ENCODE measurements at regions of chr18 and their contacts with region 1.

Region 1: DNA sequence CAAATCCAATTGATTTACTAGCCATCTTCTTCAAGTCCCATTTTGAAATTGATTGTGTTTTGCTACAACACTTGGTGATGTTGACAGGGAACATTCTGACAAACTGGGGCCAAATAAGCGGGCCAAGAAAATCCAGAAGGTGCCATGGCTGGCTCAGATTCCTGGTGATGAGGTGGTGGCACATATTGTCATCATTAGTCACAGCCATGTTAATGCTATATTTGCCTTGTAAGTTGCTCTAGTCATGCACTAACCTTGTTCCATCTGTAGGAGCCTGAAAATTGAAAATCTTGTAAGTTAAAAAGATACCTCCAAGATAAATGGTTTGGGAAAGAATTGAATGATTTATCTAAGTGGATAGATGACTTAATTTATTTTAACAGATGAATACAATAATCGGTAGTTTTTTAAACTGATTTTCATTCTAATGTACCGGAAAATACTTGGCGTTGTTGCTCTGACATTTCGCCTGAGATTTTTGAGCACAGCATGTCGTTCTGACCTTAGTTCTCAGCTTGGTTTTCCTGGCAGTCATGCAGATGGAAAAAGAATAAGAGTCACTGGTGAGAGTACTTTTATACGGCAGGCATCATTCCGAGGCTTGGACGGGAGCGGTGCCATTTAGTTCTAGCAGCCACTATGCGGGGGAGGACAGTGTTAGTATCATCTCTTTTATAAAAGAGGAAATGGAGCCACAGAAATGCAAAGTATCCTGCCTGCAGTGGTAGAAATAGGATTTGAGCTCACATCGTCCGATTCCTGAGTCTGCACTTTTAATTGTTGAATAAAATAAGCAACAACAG is 133.9 kb downstream of the ZNF532 start:
- DNase-seq: peak; percentile 79
- ATAC-seq: peak; percentile 79 to 83

Region 2: GRCh38 chr18:58864146-58865032 is 134.2 kb before region 1 on chr18 and contains the start of gene ZNF532:
- intact Hi-C with region 1: loop called (anchors 5 to 10 kb)
- DNase-seq: peak; percentile 36
- ATAC-seq: peak; percentile 39 to 53
- total RNA-seq, gene ZNF532: 56.8 to 57.9 TPM

Region 3: GRCh38 chr18:58960946-58961722 is 37.5 kb before region 1 on chr18:
- intact Hi-C with region 1: loop called in 1 of 2 experiments (anchors 5 kb)
- DNase-seq: peak; percentile 54
- ATAC-seq: peak; percentile 78 to 90

Region 4: DNA sequence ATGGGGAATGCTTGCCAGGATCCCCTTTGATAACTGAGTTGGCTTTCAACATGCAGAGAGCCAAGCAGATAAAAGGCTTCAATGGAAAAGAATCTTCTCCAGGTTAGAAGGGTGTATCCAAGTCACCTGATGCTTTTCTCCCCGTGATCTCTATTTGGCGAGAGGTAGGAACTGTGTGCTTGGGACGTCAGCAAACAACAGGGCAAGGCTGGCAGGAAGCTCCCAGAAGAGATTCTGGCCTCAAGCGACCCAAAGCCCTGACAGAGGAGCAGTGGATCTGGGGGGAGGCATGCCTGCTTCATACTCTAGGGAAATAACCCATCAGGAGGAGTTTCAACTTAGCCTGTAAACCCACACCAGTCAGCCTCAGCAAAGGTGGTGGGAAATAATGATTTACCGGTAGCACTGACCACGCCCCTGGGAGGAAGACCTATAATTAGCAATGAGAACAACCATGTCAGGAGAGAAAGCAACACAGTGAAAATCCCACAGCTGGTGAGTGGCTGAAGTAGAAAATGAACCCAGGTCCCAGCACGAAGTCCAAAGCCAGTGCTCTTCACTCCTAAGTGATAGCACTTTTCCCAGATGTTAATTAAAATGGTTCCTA is 64.8 kb after region 1 on chr18:
- intact Hi-C with region 1: loop called in 1 of 2 experiments (anchors 2 kb)
- DNase-seq: no peak
- ATAC-seq: no peak